Heart right ventricle (tissue), 16 donors: ENCODE measurements at regions of chr2 and their contacts with region 1.

Region 1: DNA sequence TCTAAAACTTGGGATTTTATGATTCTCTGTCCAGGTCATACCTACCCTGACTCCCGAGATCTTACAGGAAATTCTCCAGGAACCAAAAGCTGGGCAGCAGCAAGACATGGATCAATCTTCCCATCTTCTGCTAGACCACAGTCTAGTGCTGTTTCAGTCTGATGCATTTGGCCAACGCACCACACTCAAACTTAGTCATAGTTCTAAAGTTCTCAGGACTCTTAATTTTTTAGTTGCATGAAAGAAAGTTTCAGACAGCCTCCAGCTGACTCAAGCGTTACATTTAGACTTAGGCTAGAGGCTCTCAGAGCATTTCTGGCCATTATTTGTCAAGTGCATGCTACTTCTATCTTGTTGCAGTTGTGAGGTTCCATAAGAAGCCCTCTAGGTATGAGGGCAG is 230.1 kb upstream of the CCDC150 start:
- DNase-seq: no peak
- ATAC-seq: no peak
- H3K4me3 ChIP-seq: no peak overlapping the region
- H3K27ac ChIP-seq: no peak overlapping the region
- H3K4me1 ChIP-seq: peaks cover 0 to 60% (median 24%) of the 10 kb centered on the region in 9 donors
- H3K27me3 ChIP-seq: no peaks in the 10 kb centered on the region
- CTCF ChIP-seq: no peak

Region 2: GRCh38 chr2:196225213-196225612 is 184.2 kb before region 1 on chr2:
- intact Hi-C with region 1: no loop called
- DNase-seq: no peak
- ATAC-seq: no peak
- H3K4me3 ChIP-seq: no peak overlapping the region
- H3K27ac ChIP-seq: no peak overlapping the region
- H3K4me1 ChIP-seq: peaks cover 0 to 29% (median 0%) of the 10 kb centered on the region in 9 donors
- H3K27me3 ChIP-seq: no peaks in the 10 kb centered on the region
- CTCF ChIP-seq: no peak

Region 3: GRCh38 chr2:196431957-196432356 is 22.6 kb after region 1 on chr2:
- intact Hi-C with region 1: no loop called
- DNase-seq: no peak
- ATAC-seq: no peak
- H3K4me3 ChIP-seq: no peak overlapping the region
- H3K27ac ChIP-seq: peak overlapping the region in 1 of 10 donors; percentile 6
- H3K4me1 ChIP-seq: peaks cover 0 to 75% (median 32%) of the 10 kb centered on the region in 9 donors
- H3K27me3 ChIP-seq: no peaks in the 10 kb centered on the region
- CTCF ChIP-seq: peak in 7 of 9 donors; percentile 19 to 49 (median 27)

Region 4: DNA sequence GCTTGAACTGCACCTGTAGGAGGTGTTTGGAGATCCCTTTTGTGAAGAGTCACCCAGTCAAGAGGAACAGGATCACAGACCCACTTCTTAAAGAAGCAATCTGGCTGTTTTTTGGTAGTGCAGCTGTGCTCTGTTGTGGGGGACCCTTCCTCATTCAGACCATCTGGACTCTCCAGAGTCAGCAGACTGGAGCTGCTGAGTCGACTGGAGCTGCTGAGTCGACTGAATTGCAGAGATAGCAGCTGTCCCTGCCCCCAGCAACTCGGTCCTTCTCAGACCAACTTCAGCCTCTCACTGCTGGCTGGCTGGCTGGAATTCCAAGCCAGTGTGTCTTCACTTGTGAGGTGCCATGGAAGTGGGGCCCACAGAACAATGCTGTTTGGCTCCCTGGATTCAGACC is 333.3 kb after region 1 on chr2:
- intact Hi-C with region 1: loop called in 1 of 10 experiments (anchors 2 kb)
- DNase-seq: no peak
- ATAC-seq: no peak
- H3K4me3 ChIP-seq: no peak overlapping the region
- H3K27ac ChIP-seq: no peak overlapping the region
- H3K4me1 ChIP-seq: no peaks in the 10 kb centered on the region
- H3K27me3 ChIP-seq: no peaks in the 10 kb centered on the region
- CTCF ChIP-seq: no peak